ENCODE measurements at regions of chr6 and their contacts with region 1.

Region 1: DNA sequence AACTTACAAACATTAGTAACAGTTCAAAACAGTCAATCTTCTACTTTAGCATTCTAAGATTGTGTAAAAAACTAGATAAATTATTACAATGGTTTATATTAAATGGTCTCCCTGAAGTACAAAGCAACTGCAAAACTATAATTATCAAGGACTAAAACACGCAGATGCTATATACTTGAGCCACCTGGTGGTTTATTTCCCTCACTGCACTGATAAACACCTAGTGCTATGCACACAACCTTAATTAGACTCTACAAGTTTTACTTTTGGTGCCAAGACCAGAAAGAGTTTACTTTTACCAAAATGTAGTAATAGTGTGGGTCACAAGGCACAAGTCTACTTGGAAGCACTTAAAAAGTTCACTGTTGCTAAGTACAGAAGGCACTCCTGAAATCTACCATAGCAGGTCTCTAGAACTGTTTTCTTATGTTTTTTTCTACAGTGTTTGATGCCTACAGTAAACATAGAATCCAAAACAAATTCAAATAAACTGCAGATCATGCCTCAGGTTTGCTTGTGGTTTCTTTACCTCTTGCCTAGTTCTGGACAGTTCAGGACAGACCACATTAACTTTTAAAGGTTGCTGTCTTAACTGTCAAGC is 49.2 kb downstream of the GMDS start:
- DNase-seq: no peak
- H3K4me3 Mint-ChIP-seq: no peak overlapping the region
- H3K27ac Mint-ChIP-seq: no peak overlapping the region
- H3K4me1 Mint-ChIP-seq: no peaks in the 10 kb centered on the region
- H3K27me3 Mint-ChIP-seq: peaks cover 5% of the 10 kb centered on the region

Region 2: GRCh38 chr6:1596088-1596852 is 599.9 kb before region 1 on chr6:
- intact Hi-C with region 1: loop called (anchors 1 kb)
- DNase-seq: peak; percentile 50
- H3K4me3 Mint-ChIP-seq: no peak overlapping the region
- H3K27ac Mint-ChIP-seq: no peak overlapping the region
- H3K4me1 Mint-ChIP-seq: peaks cover 4% of the 10 kb centered on the region
- H3K27me3 Mint-ChIP-seq: peaks cover 55% of the 10 kb centered on the region

Region 3: GRCh38 chr6:1770968-1771723 is 425.0 kb before region 1 on chr6:
- intact Hi-C with region 1: loop called (anchors 10 kb)
- DNase-seq: no peak
- H3K4me3 Mint-ChIP-seq: no peak overlapping the region
- H3K27ac Mint-ChIP-seq: no peak overlapping the region
- H3K4me1 Mint-ChIP-seq: peaks cover 25% of the 10 kb centered on the region
- H3K27me3 Mint-ChIP-seq: no peaks in the 10 kb centered on the region

Region 4: DNA sequence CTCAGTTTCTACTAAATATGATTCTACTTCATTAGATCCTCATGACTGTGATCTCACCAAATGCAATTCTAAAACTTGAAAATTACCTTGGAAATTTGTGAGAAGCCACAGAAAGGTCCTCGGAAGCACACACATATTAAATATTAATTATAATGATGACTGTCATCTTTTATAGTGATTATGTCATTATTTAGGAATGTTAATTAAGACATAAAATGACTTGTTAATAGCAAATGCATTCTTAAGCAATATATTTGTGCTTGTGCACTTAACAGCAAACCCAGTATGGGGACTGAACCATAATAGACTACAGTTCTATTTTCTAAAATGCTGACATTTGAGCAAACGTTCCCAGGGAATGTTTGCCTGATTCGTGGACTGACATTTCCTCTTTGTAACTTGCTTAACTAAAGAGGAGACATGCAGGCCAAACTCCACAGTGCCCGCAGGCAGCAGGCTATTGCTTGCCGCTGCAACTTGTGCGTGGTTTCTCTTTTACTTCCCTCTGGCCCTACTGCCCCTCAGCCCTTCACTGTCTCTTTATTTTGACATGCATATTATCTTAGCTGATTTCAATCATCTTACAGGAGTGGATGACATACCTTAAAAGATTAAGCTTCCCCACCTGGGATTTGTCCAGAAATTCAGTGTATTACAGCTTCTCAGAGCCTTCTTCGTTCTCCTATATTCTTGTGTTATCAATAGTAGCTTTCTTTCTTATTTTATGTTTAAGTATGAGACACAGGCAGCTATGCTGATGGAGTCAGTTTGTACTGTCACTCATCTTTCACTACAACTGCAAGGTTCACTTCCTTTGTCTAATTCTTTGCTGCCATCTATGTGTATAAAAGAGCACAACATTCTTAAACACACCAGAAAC is 92.3 kb before region 1 on chr6:
- intact Hi-C with region 1: loop called (anchors 1 kb)
- DNase-seq: no peak
- H3K4me3 Mint-ChIP-seq: no peak overlapping the region
- H3K27ac Mint-ChIP-seq: no peak overlapping the region
- H3K4me1 Mint-ChIP-seq: peaks cover 6% of the 10 kb centered on the region
- H3K27me3 Mint-ChIP-seq: peaks cover 2% of the 10 kb centered on the region

Region 5: GRCh38 chr6:2448820-2449571 is 252.8 kb after region 1 on chr6:
- intact Hi-C with region 1: loop called (anchors 5 kb)
- DNase-seq: no peak
- H3K4me3 Mint-ChIP-seq: no peak overlapping the region
- H3K27ac Mint-ChIP-seq: no peak overlapping the region
- H3K4me1 Mint-ChIP-seq: peaks cover 8% of the 10 kb centered on the region
- H3K27me3 Mint-ChIP-seq: peaks cover 11% of the 10 kb centered on the region

Measured in activated T-helper 1 cell treated with anti-CD3 and anti-CD28 coated beads, Interleukin-12 subunit alpha, Interleukin-12 subunit beta, Interleukin-2, Interleukin-4 antibody, amounts not matched to agents 30 ng/mL and 10 ng/mL and 1 ng/mL, durations not matched to agents 14 hours and 24 hours and 36 hours (primary cell).